ENCODE measurements at regions of chr1 and their contacts with region 1.

Region 1: GRCh38 chr1:25037174-25038074 is 107.3 kb upstream of the RUNX3 start:
- DNase-seq: peak; percentile 64
- ATAC-seq: peak; percentile 56
- H3K4me3 Mint-ChIP-seq: no peak overlapping the region
- H3K27ac Mint-ChIP-seq: peak overlapping the region; percentile 46
- H3K4me1 Mint-ChIP-seq: peaks cover 9% of the 10 kb centered on the region
- H3K27me3 Mint-ChIP-seq: no peaks in the 10 kb centered on the region
- CTCF ChIP-seq: no peak

Region 2: DNA sequence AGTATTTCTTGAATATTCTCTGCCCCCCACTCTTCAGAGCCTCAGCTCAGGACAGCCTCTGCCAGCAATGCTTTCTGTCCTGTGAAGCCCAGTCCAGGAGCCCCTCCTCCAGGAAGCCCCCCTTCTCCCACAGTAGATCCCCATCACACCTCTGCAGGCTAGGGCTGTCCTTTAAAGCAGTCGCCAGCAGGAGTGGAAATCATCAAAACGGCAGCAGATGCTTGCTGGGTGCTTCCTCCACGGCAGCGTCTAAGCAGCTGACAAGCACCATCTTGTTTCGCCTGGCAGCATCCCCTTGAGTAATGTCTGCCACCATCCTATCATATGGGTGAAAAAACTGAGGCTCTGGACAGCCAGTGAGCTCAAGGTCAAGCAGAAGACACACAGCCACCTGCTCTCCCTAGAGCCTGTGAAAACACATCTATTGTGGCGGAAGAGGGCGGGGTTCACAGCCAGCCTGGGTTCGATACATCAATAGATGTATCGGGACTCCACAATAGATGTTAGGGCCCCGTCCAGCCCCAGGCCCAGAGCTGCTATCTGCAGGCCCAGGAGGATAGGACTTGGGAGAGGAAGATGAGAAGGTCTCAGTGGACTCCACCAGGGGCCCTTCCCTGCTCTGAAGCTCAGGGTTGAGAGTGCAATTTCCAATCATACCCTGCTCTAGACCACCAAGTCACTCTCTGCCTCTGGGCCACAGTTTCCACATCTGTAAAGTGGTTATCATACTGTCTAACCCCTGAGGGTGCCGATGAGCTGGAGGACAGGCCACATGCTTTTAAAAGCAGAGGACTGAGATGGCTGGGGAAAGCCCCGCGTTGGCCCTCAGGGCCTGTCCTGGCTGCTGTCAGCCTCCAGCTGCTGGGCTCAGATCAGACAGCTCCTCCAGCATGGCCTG is 124.8 kb before region 1 on chr1:
- CTCF ChIA-PET with region 1: interaction called, 10 read pairs
- POLR2A ChIA-PET with region 1: no interaction called
- intact Hi-C with region 1: no loop called
- DNase-seq: no peak
- ATAC-seq: no peak
- H3K4me3 Mint-ChIP-seq: no peak overlapping the region
- H3K27ac Mint-ChIP-seq: peak overlapping the region; percentile 53
- H3K4me1 Mint-ChIP-seq: peaks cover 25% of the 10 kb centered on the region
- H3K27me3 Mint-ChIP-seq: no peaks in the 10 kb centered on the region
- CTCF ChIP-seq: no peak

Region 3: GRCh38 chr1:24946861-24947658 is 90.4 kb before region 1 on chr1:
- CTCF ChIA-PET with region 1: interaction called, 80 read pairs
- POLR2A ChIA-PET with region 1: interaction called, 42 read pairs
- intact Hi-C with region 1: no loop called
- DNase-seq: no peak
- ATAC-seq: peak; percentile 75
- H3K4me3 Mint-ChIP-seq: no peak overlapping the region
- H3K27ac Mint-ChIP-seq: peak overlapping the region; percentile 65
- H3K4me1 Mint-ChIP-seq: peaks cover 46% of the 10 kb centered on the region
- H3K27me3 Mint-ChIP-seq: no peaks in the 10 kb centered on the region
- CTCF ChIP-seq: no peak

Region 4: DNA sequence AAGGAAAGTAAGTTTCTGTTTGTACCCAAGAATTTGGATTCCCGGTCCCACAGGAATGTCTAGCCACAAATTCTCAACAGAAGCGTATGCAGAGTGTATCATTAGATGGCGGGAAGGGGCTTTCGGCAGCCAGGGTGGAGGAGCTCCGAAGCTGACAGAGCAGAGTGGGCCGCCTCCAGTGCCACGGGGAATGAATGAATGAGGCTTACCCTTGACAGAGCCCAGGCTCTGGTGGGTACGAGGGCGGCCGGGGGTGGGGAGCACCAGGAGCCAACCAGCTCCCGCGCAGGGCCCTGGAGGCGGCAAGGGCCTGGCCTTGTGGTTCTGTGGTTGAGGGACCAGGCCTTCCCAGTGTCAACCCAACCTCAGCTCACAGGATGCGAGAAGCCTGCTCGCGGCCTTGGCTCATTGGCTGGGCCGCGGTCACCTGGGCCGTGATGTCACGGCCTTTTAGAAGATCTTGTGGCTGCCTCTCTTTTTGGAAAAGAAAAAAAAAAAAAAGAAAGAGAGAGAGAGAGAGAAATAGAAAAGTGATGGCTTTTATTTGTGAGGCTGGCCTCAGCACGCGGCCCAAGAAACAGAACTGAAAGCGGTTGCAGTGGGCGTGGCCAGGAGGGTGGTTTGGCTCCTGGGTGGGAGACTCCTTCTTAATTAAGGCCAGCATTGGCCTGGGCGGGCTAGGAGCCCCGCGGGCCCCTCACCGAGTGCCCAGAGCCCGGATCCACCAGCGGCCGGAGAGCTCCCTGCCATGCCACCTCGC is 72.4 kb before region 1 on chr1:
- CTCF ChIA-PET with region 1: interaction called, 80 read pairs
- POLR2A ChIA-PET with region 1: interaction called, 63 read pairs
- intact Hi-C with region 1: loop called (anchors 1 kb)
- DNase-seq: peak; percentile 67
- ATAC-seq: peak; percentile 84
- H3K4me3 Mint-ChIP-seq: peak overlapping the region; percentile 76
- H3K27ac Mint-ChIP-seq: peak overlapping the region; percentile 88
- H3K4me1 Mint-ChIP-seq: peaks cover 57% of the 10 kb centered on the region
- H3K27me3 Mint-ChIP-seq: no peaks in the 10 kb centered on the region
- CTCF ChIP-seq: no peak

Region 5: DNA sequence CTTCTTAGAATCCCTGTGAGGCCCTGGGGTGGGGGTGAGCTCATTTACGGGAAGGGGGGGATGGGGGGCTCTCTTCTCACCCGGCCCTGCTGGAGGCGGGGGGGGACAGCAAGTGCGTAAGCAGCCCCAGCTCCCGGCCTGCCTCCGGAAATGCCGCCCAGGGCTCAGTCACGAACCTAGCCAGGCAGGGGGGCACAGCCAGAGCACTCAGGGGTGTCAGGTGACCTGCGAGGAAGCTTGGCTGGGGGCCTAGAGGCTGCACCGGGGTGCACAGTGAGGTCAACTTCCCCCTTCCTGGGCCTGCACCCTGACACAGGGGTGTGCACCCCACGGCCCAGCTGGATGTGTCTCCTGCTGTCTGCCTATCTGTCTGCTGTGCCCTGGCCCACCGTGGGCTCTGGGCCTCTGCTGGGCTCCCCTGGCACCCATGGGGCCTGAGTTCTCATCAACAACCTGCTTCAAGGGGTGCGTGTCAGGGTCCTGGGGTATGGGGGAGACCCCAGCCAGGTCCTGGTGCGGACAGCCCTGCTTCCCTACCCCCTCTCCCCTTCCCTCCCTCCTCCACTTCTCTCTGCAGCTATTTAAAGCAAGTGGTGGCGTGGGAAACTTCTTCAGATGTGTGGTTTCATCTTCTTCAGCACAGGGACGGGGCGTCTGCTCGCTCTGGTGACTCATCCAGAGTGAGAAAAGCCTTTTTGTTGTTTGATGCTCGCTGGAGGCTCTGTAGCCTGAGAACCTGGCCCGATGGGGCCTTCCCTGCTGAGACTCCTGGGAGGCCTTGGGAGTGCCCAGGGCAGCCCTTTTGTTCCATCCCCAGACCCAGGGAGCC is 14.8 kb before region 1 on chr1:
- CTCF ChIA-PET with region 1: interaction called, 28 read pairs
- POLR2A ChIA-PET with region 1: interaction called, 248 read pairs
- intact Hi-C with region 1: loop called (anchors 2 kb)
- DNase-seq: peak; percentile 84
- ATAC-seq: peak; percentile 79
- H3K4me3 Mint-ChIP-seq: peak overlapping the region; percentile 52
- H3K27ac Mint-ChIP-seq: peak overlapping the region; percentile 91
- H3K4me1 Mint-ChIP-seq: peaks cover 71% of the 10 kb centered on the region
- H3K27me3 Mint-ChIP-seq: no peaks in the 10 kb centered on the region
- CTCF ChIP-seq: no peak

Region 6: DNA sequence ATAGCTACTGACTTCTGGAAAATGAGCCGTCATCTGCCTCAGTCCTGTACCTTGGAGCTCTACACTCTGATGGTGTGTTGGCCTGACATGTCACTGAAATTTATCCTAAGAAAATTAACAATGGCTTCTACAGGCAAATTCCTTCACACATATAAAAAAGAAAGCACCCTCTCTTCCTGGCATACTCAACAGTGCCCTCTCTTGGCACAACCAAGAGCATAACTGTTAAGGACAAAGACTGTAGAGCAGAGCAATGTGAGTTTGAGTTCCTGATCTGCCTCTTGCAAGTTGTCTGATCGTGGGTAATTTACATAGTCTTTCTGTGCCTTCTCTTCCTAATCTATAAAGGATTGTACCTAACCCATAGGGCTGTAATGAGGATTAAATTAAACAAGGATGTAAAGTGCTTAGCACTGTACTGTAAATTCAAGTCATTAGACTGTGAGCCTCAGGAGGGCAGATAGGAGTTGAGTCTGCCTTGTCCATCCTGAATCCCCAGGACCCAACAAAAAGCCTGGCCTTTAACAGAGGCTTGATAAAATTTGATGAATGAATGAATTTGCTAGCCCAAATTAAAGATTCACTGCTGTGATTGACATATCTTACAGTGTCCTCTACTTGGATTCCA is 111.4 kb after region 1 on chr1:
- CTCF ChIA-PET with region 1: interaction called, 3 read pairs
- POLR2A ChIA-PET with region 1: no interaction called
- intact Hi-C with region 1: loop called (anchors 5 kb)
- DNase-seq: no peak
- ATAC-seq: peak; percentile 40
- H3K4me3 Mint-ChIP-seq: no peak overlapping the region
- H3K27ac Mint-ChIP-seq: no peak overlapping the region
- H3K4me1 Mint-ChIP-seq: peaks cover 15% of the 10 kb centered on the region
- H3K27me3 Mint-ChIP-seq: peaks cover 32% of the 10 kb centered on the region
- CTCF ChIP-seq: no peak

Measured in activated B cell treated with CpG ODN at 0.5 μM for 24 hours (primary cell).